H1 (cell line): ENCODE measurements at regions of chr7 and their contacts with region 1.

Region 1: DNA sequence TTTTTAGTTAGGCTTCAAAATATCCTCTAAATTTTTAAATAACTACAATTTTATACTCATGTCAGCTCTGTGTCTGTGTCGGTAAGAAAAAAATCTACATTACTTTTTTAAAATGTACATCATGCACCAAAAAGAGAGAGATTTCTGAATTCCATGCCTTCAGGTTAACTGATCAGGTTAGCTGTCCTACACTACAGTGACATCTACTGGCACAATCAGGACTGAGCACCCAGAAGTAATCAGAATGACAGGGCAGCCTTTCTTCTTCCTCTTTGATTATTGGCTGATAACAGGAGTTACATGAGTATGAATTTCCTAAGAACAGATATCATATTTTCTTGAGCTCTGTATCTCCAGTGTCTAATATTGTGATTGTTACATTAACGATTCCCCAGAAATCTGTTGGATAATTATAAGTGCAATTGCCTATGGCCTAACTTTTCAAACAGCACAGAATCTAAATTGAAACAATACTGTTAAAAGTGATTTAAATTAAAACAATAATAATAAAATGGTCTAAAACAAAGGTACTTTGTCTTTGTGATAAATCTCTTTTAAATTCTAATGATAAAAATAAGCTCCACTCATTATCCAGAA is 41.8 kb upstream of the HYCC1 start:
- DNase-seq: no peak
- H3K4me3 ChIP-seq: no peak overlapping the region
- H3K27ac ChIP-seq: no peak overlapping the region
- H3K4me1 ChIP-seq: no peaks in the 10 kb centered on the region
- H3K27me3 ChIP-seq: no peaks in the 10 kb centered on the region
- CTCF ChIP-seq: peak in 2 of 3 experiments; percentile 78 to 83; a peak in 3 of 4 replicates
- EP300 ChIP-seq: no peak
- POLR2A ChIP-seq: no peak
- RAD21 ChIP-seq: peak; percentile 98

Region 2: DNA sequence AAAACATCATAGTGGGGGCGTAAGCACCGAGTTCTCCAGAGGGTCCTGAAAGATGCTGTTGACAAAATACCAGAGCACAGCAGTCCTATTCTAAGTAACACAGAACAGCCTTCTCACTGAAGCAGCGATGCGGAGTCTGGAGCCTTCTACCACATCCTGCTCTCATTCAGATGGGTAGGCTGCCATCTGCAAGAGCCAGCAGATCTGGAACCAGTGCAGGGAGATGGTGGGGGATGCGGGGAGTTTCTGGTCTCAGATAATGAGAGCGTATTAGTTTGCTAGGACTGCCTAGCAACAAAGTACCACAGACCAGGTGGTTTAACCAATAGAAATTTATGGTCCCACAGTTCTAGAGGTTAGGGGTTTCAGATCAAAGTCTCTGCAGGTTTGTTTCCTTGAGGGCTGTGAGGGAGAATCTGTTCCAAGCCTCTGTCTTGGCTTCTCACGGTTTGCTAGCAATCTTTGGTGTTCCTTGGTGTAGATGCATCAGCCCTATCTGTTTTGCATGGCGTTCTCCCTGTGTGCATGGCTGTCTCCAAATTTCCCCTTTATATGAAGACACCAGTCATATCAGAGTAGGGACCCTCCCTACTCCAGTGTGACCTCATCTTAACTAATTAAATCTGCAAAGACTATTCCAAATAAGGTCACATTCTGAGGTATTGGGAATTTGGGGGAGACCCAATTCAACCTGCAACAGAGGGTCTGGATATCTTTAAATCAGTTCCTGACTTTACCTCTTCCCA is 503.7 kb before region 1 on chr7:
- CTCF ChIA-PET with region 1: interaction called, 15 read pairs
- POLR2A ChIA-PET with region 1: no interaction called
- DNase-seq: peak in 1 of 2 experiments; percentile 39
- H3K4me3 ChIP-seq: no peak overlapping the region
- H3K27ac ChIP-seq: no peak overlapping the region
- H3K4me1 ChIP-seq: peaks cover 0 to 7% (median 4%) of the 10 kb centered on the region in 4 experiments; a peak in 4 of 7 replicates
- H3K27me3 ChIP-seq: no peaks in the 10 kb centered on the region
- CTCF ChIP-seq: no peak
- EP300 ChIP-seq: no peak
- POLR2A ChIP-seq: no peak
- RAD21 ChIP-seq: no peak

Region 3: DNA sequence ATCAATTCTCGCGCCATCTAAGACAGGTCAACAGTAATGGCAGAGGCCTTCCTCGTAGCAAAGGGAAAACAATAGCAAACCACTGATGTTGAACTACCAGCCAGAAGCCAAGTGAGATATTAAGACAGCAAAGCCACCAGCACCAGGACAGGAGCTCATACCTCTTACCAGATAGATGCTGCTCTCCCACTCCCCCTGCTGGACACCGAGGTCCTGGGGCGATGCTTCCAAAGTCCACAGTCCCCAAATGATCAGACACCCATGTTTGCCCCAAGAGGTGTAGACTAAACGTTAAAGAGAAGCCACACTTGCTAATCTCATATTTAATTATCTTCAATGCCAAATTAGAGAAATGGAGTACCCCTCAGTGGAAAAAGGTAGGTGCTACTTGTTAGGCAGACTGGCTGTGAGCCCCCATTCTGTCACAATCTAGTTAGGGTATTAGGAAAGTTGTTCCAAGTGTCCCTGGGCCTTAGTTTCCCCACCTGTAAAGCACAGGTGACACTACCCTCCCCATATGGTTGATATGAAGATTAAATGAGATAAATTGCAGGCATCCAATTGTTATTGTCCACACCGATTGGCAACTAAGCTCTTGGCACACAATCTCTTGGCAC is 273.0 kb before region 1 on chr7:
- CTCF ChIA-PET with region 1: interaction called, 23 read pairs
- POLR2A ChIA-PET with region 1: no interaction called
- DNase-seq: peak in 1 of 2 experiments; percentile 88
- H3K4me3 ChIP-seq: no peak overlapping the region
- H3K27ac ChIP-seq: no peak overlapping the region
- H3K4me1 ChIP-seq: no peaks in the 10 kb centered on the region
- H3K27me3 ChIP-seq: no peaks in the 10 kb centered on the region
- CTCF ChIP-seq: peak; percentile 84 to 97 (median 94)
- EP300 ChIP-seq: no peak
- POLR2A ChIP-seq: no peak
- RAD21 ChIP-seq: peak; percentile 76 to 84

Region 4: GRCh38 chr7:22860784-22861482 is 194.7 kb before region 1 on chr7:
- CTCF ChIA-PET with region 1: interaction called, 11 read pairs
- POLR2A ChIA-PET with region 1: interaction called, 12 read pairs
- DNase-seq: no peak
- H3K4me3 ChIP-seq: no peak overlapping the region
- H3K27ac ChIP-seq: no peak overlapping the region
- H3K4me1 ChIP-seq: peaks cover 0 to 13% (median under 1%) of the 10 kb centered on the region in 4 experiments; a peak in 5 of 7 replicates
- H3K27me3 ChIP-seq: no peaks in the 10 kb centered on the region
- CTCF ChIP-seq: peak; percentile 32 to 62 (median 39); a peak in 3 of 4 replicates
- EP300 ChIP-seq: no peak
- POLR2A ChIP-seq: no peak; a peak in 1 of 3 replicates
- RAD21 ChIP-seq: peak; percentile 43 to 59

Region 5: DNA sequence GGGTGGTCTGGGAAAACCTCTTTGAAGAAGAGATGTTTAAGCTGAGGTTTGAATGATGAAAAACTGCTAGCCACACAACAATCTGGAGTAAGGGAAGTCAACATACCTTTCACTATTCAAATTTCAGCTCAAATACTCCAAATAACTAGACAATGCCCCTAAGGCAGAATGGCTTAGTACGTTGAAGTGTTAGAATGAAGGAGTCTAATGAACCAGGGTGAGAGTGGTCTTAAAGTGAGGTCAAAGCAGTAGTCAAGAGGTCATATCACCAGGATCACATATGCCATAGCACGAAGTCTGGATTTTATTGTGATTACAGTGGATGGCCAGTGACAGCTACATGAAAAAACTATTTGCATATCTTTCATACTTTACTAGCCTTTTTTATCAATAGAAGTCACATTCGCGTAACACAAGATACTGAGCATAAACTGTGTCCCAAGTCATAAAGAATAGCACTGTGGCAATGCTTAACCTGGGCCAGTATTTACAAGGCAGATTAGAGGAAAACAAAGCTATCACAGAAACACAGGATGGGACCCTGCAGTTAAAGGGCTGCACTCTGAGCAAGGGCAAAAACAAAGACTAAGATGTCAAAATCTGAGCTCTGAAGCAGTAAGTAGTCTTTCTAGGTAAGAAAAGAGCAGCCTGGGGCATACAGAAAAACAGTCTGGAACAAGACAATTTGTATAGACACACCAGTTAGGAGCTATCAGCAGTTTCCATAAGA is 103.2 kb before region 1 on chr7:
- CTCF ChIA-PET with region 1: interaction called, 10 read pairs
- POLR2A ChIA-PET with region 1: no interaction called
- DNase-seq: no peak
- H3K4me3 ChIP-seq: no peak overlapping the region
- H3K27ac ChIP-seq: no peak overlapping the region
- H3K4me1 ChIP-seq: peaks cover 0 to 9% (median 2%) of the 10 kb centered on the region in 4 experiments; a peak in 4 of 7 replicates
- H3K27me3 ChIP-seq: no peaks in the 10 kb centered on the region
- CTCF ChIP-seq: no peak
- EP300 ChIP-seq: no peak
- POLR2A ChIP-seq: no peak
- RAD21 ChIP-seq: no peak

Region 6: GRCh38 chr7:23043441-23043840 is 12.2 kb before region 1 on chr7:
- CTCF ChIA-PET with region 1: interaction called, 10 read pairs
- POLR2A ChIA-PET with region 1: no interaction called
- DNase-seq: no peak
- H3K4me3 ChIP-seq: no peak overlapping the region
- H3K27ac ChIP-seq: no peak overlapping the region
- H3K4me1 ChIP-seq: no peaks in the 10 kb centered on the region
- H3K27me3 ChIP-seq: no peaks in the 10 kb centered on the region
- CTCF ChIP-seq: no peak
- EP300 ChIP-seq: no peak
- POLR2A ChIP-seq: no peak
- RAD21 ChIP-seq: no peak